PC-3 (cell line): ENCODE measurements at regions of chr11 and their contacts with region 1.

Region 1: GRCh38 chr11:94845622-94846021 is 77.5 kb downstream of the AMOTL1 start:
- DNase-seq: peak; percentile 93
- ATAC-seq: peak; percentile 100
- H3K4me3 ChIP-seq: no peak overlapping the region
- H3K27ac ChIP-seq: 0 out of 2 replicates have a peak overlapping the region, but pooled peaks have one; percentile 3
- H3K4me1 ChIP-seq: peaks cover 16% of the 10 kb centered on the region
- H3K27me3 ChIP-seq: no peaks in the 10 kb centered on the region
- CTCF ChIP-seq: no peak

Region 2: GRCh38 chr11:94635072-94635471 is 210.6 kb before region 1 on chr11:
- CTCF ChIA-PET with region 1: no interaction called
- POLR2A ChIA-PET with region 1: no interaction called
- intact Hi-C with region 1: no loop called
- DNase-seq: no peak
- ATAC-seq: no peak
- H3K4me3 ChIP-seq: no peak overlapping the region
- H3K27ac ChIP-seq: no peak overlapping the region
- H3K4me1 ChIP-seq: no peaks in the 10 kb centered on the region
- H3K27me3 ChIP-seq: no peaks in the 10 kb centered on the region
- CTCF ChIP-seq: no peak

Region 3: GRCh38 chr11:94741022-94741679 is 104.5 kb before region 1 on chr11:
- CTCF ChIA-PET with region 1: no interaction called
- POLR2A ChIA-PET with region 1: interaction called, 12 read pairs
- intact Hi-C with region 1: no loop called
- DNase-seq: peak; percentile 87
- ATAC-seq: peak; percentile 46
- H3K4me3 ChIP-seq: peak overlapping the region; percentile 76
- H3K27ac ChIP-seq: peak overlapping the region; percentile 6; the same call in 1 of the 2 replicates
- H3K4me1 ChIP-seq: peaks cover 51% of the 10 kb centered on the region
- H3K27me3 ChIP-seq: no peaks in the 10 kb centered on the region
- CTCF ChIP-seq: peak; percentile 65

Region 4: GRCh38 chr11:94834911-94835593 is 10.6 kb before region 1 on chr11:
- CTCF ChIA-PET with region 1: no interaction called
- POLR2A ChIA-PET with region 1: no interaction called
- intact Hi-C with region 1: loop called (anchors 1 kb)
- DNase-seq: no peak
- ATAC-seq: no peak
- H3K4me3 ChIP-seq: no peak overlapping the region
- H3K27ac ChIP-seq: no peak overlapping the region
- H3K4me1 ChIP-seq: peaks cover 45% of the 10 kb centered on the region
- H3K27me3 ChIP-seq: no peaks in the 10 kb centered on the region
- CTCF ChIP-seq: no peak

Region 5: DNA sequence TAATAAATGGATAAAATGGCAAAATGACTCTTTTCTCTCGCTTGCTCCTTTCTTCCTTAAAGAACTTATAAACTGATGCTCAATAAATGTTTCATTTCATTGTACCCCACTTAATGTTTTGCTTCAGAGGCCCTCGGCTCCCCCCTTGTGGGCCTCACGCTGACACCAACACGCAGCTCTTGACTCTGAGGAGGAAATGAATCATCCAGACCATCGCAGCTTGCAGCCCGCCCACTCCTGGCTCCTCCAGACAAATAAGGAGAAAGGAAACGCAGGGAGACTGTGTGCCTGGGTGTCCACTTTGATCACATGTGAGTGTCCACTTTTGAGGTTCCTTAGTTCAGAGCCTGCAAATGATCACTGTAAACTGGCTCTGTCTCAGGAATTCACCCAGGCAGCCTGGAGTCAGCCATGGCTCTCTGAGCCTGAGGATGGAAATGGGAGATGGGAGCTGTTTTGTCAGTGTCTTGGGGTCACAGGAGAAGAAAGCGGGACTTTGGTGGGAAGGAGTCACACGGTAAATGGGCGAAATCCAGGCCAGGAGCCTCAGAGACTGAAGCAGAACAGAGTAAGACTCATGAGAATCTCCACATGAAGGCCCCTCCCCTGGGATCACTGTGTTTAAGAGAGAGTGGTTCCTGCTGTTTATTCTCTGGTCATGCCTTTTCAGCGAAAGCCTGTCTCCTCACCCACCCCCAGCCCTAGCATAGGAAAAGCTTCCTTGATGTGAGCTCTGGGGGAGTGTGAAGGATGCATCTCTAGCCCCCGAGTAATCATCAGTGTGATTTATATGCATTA is 31.2 kb after region 1 on chr11:
- CTCF ChIA-PET with region 1: no interaction called
- POLR2A ChIA-PET with region 1: no interaction called
- intact Hi-C with region 1: loop called (anchors 2 kb)
- DNase-seq: peak; percentile 84
- ATAC-seq: peak; percentile 79
- H3K4me3 ChIP-seq: no peak overlapping the region
- H3K27ac ChIP-seq: peak overlapping the region; percentile 22
- H3K4me1 ChIP-seq: peaks cover 44% of the 10 kb centered on the region
- H3K27me3 ChIP-seq: no peaks in the 10 kb centered on the region
- CTCF ChIP-seq: peak; percentile 58